ENCODE measurements at regions of chr15 and their contacts with region 1.

Region 1: GRCh38 chr15:41557673-41558399 is 1.2 kb upstream of the TYRO3 start:
- DNase-seq: no peak
- H3K4me3 ChIP-seq: peak overlapping the region; percentile 54
- CTCF ChIP-seq: peak; percentile 84

Region 2: GRCh38 chr15:41377978-41378377 is 179.9 kb before region 1 on chr15:
- CTCF ChIA-PET with region 1: no interaction called
- POLR2A ChIA-PET with region 1: no interaction called
- DNase-seq: no peak
- H3K4me3 ChIP-seq: no peak overlapping the region
- CTCF ChIP-seq: no peak

Region 3: DNA sequence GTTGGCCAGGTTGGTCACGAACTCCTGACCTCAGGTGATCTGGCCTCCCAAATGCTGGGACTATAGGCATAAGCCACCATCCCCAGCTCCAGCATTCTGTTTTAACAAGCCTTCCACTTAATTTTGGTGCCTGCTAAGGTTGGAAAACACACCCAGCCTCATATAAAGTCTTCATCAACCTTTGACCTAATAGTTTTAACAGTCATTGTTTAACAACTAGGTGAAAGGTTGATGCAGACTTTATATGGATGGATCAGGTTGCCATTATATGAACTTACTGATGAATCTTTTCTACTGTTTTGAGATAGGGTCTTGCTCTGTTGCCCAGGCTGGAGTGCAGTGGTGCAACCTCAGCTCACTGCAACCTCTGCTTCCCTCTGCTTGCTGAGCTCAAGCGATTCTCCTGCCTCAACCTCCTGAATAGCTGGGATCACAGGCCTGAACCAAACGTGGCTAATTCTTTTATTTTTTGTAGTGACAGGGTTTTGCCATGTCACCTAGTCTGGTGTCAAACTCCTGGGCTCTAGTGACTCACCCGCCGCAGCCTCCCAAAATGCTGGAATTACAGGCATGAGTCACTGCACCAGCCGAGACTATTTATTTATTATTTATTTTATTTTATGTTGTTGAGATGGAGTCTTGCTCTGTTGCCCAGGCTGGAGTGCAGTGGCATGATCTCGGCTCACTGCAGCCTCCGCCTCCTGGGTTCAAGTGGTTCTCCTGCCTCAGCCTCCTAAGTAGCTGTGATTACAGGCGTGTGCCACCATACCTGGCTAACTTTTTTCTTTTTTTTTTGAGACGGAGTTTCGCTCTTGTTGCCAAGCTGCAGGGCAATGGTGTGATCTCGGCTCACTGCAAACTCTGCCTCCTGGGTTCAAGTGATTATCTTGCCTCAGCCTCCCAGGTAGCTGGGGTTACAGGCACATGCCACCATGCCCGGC is 10.7 kb before region 1 on chr15:
- CTCF ChIA-PET with region 1: interaction called, 12 read pairs
- POLR2A ChIA-PET with region 1: interaction called, 4 read pairs
- DNase-seq: no peak
- H3K4me3 ChIP-seq: no peak overlapping the region
- CTCF ChIP-seq: no peak

Region 4: DNA sequence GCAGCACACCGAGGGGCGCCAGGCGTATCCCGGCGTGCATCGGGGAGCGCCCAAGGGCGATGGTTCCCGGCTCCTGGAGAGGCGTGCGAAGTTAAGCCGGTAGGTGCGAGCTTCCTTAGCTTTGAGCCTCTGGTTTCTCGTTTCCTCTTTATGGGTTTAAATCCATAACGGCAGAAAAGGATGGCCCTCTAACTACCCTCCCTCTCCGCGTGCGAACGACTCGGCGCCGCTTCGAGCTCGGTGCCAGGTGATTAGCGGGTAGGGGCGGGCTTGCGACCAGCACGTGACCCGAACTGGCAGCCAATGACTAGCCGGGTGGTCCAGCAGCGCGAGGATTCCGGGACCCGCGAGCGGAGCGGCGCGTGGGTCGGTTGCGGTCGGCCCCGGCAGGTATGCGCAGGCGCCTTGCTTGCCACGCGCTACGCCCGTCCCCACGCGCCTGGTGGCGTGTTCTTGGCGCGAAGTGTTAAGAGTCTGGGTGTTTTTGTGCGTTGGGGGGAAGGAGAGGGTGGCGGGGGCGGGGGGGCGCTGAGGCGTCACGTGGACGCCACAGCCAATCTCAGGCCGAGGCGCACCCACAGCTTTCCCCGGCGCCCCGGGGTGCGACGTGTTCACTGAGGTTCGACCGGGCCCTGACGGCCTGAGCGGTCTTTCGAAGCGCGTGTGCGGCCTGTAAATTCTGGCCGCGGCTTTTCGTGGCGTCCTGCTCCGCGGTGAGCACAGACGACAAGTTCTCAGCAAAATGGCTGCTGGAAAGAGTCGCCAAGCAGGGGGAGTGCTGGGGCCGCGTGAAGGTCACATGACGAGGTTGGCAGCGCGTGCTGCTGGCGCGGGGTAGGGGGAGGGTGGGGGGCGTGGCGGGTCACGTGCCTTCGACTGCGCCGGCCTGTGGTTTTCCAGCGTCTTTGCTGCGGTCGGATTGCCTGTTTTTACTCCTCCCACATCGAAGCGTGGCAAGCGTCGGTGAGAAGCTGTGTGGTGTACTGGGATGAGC is 63.7 kb after region 1 on chr15:
- CTCF ChIA-PET with region 1: no interaction called
- POLR2A ChIA-PET with region 1: no interaction called
- DNase-seq: no peak
- H3K4me3 ChIP-seq: peak overlapping the region; percentile 66
- CTCF ChIP-seq: no peak